ENCODE measurements at regions of chr1 and their contacts with region 1.

Region 1: GRCh38 chr1:76901158-76901767 is 34.0 kb downstream of the ST6GALNAC5 start:
- DNase-seq: peak in 6 of 14 experiments; percentile 0 to 60 (median 33)
- ATAC-seq: no peak
- H3K4me3 ChIP-seq: no peak overlapping the region
- H3K4me3 Mint-ChIP-seq: no peak overlapping the region
- H3K27ac ChIP-seq: no peak overlapping the region
- H3K27ac Mint-ChIP-seq: no peak overlapping the region
- H3K4me1 ChIP-seq: no peaks in the 10 kb centered on the region
- H3K4me1 Mint-ChIP-seq: no peaks in the 10 kb centered on the region
- H3K27me3 ChIP-seq: no peaks in the 10 kb centered on the region
- H3K27me3 Mint-ChIP-seq: peaks cover 4% of the 10 kb centered on the region
- CTCF ChIP-seq: peak; percentile 70

Region 2: DNA sequence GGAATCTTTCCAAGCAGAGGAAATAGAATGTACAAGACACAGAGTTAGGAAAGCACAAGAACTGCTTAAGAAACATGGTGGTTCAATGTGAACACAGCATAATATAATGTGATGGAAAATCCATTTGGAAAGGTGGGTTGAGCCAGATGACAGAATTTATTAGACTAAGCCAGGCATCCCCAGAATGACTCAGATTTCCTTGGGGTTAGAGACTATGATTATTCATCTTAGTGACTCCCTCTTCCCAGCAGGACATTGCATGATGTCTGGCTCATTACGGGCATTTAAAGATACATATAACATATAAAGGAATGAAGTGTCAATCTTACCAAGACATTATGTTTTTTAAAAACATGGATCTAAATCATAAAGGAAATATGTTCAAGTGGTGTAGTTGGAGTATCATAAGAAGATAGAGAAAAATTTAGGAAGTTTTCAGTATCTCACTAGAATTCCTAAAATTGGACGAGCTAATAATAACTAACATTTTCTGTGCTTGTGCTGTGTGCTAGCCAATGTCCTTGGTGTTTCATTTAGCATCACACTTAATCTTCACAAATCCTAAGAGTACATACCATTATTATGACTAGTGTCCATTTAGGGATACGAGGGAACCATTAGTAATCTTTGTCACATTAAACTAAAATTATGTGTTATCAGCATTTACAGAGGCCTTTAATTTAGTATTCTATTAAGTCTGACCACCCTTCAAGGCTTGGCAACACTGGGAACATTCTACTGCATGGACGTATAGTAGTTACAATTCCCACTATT is 75.0 kb before region 1 on chr1:
- CTCF ChIA-PET with region 1: no interaction called
- POLR2A ChIA-PET with region 1: no interaction called
- intact Hi-C with region 1: no loop called
- DNase-seq: no peak
- ATAC-seq: no peak
- H3K4me3 ChIP-seq: no peak overlapping the region
- H3K4me3 Mint-ChIP-seq: no peak overlapping the region
- H3K27ac ChIP-seq: no peak overlapping the region
- H3K27ac Mint-ChIP-seq: no peak overlapping the region
- H3K4me1 ChIP-seq: no peaks in the 10 kb centered on the region
- H3K4me1 Mint-ChIP-seq: peaks cover 6% of the 10 kb centered on the region
- H3K27me3 ChIP-seq: peaks cover 2 to 5% of the 10 kb centered on the region in 2 experiments
- H3K27me3 Mint-ChIP-seq: peaks cover 14% of the 10 kb centered on the region
- CTCF ChIP-seq: no peak

Region 3: DNA sequence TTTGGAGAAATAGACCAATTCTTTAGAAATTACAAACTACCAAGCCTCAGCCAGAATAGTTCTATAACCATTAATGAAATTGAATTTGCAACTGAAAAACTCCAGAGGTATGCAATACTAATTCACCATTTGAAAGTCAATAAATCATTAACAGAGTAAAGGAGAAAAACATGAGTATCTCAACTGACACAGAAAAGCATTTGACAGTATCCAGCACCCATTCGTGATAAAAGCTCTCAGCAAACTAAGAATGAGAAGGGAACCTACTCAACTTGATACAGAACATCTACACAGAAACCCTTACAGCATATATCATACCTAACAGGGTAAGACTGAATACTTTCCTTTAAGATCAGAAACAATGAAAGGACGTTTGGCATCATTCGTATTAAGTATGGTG is 20.3 kb after region 1 on chr1:
- CTCF ChIA-PET with region 1: no interaction called
- POLR2A ChIA-PET with region 1: no interaction called
- intact Hi-C with region 1: loop called in 1 of 2 experiments (anchors 1 kb)
- DNase-seq: no peak
- ATAC-seq: no peak
- H3K4me3 ChIP-seq: no peak overlapping the region
- H3K4me3 Mint-ChIP-seq: no peak overlapping the region
- H3K27ac ChIP-seq: no peak overlapping the region
- H3K27ac Mint-ChIP-seq: no peak overlapping the region
- H3K4me1 ChIP-seq: no peaks in the 10 kb centered on the region
- H3K4me1 Mint-ChIP-seq: no peaks in the 10 kb centered on the region
- H3K27me3 ChIP-seq: no peaks in the 10 kb centered on the region
- H3K27me3 Mint-ChIP-seq: peaks cover 12% of the 10 kb centered on the region
- CTCF ChIP-seq: no peak

Region 4: DNA sequence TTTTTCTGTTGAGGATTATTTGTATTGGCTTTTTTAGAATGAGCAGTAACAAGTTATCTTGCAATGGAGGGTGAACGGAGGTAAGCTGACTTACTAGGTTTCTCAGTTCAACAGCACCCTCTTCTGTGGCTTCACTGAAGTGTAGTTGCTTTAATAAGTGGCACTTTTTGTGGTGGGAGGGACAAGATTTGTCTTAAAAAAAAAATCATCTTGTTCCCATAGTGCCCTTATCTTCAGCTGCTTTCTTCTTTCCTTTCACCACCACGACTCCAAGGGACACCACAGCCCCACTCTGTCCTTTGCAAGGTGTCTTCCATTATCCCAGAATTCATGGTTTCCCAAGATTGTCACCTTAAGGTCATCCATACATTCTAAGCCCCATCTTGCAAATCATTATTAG is 225.0 kb after region 1 on chr1:
- CTCF ChIA-PET with region 1: no interaction called
- POLR2A ChIA-PET with region 1: no interaction called
- intact Hi-C with region 1: loop called in 1 of 2 experiments (anchors 10 kb)
- DNase-seq: peak in 5 of 14 experiments; percentile 7 to 64 (median 52)
- ATAC-seq: peak; percentile 76
- H3K4me3 ChIP-seq: no peak overlapping the region
- H3K4me3 Mint-ChIP-seq: no peak overlapping the region
- H3K27ac ChIP-seq: no peak overlapping the region
- H3K27ac Mint-ChIP-seq: no peak overlapping the region
- H3K4me1 ChIP-seq: no peaks in the 10 kb centered on the region
- H3K4me1 Mint-ChIP-seq: no peaks in the 10 kb centered on the region
- H3K27me3 ChIP-seq: no peaks in the 10 kb centered on the region
- H3K27me3 Mint-ChIP-seq: no peaks in the 10 kb centered on the region
- CTCF ChIP-seq: no peak